ENCODE measurements at regions of chr16 and their contacts with region 1.

Region 1: GRCh38 chr16:71845639-71846430 is at the start of gene ATXN1L:
- DNase-seq: peak; percentile 80 to 96 (median 88)
- ATAC-seq: peak; percentile 93 to 95 (median 94)
- H3K4me3 ChIP-seq: peak within 1 kb of the TSS; percentile 91
- H3K4me3 Mint-ChIP-seq: peak within 1 kb of the TSS; percentile 91 to 94 (median 92)
- H3K27ac ChIP-seq: peak within 1 kb of the TSS; percentile 91
- H3K27ac Mint-ChIP-seq: peak within 1 kb of the TSS; percentile 92 to 95
- H3K4me1 ChIP-seq: peaks cover 13 to 18% of the 10 kb centered on the region in 2 experiments
- H3K4me1 Mint-ChIP-seq: peaks cover 32 to 44% (median 42%) of the 10 kb centered on the region in 3 donors
- H3K27me3 ChIP-seq: no peaks in the 10 kb centered on the region
- H3K27me3 Mint-ChIP-seq: no peaks in the 10 kb centered on the region
- total RNA-seq, gene ATXN1L: 26.8 to 44.0 (median 29.3) TPM

Region 2: GRCh38 chr16:71315269-71315668 is 530.6 kb before region 1 on chr16:
- CTCF ChIA-PET with region 1: interaction called in 1 of 2 experiments, 12 read pairs
- POLR2A ChIA-PET with region 1: no interaction called
- DNase-seq: no peak
- ATAC-seq: no peak
- H3K4me3 ChIP-seq: no peak overlapping the region
- H3K4me3 Mint-ChIP-seq: no peak overlapping the region
- H3K27ac ChIP-seq: no peak overlapping the region
- H3K27ac Mint-ChIP-seq: no peak overlapping the region
- H3K4me1 ChIP-seq: peaks cover 0 to 3% of the 10 kb centered on the region in 2 experiments
- H3K4me1 Mint-ChIP-seq: no peaks in the 10 kb centered on the region
- H3K27me3 ChIP-seq: peaks cover 0 to 17% of the 10 kb centered on the region in 2 experiments
- H3K27me3 Mint-ChIP-seq: peaks cover 40 to 46% of the 10 kb centered on the region in 2 donors

Region 3: DNA sequence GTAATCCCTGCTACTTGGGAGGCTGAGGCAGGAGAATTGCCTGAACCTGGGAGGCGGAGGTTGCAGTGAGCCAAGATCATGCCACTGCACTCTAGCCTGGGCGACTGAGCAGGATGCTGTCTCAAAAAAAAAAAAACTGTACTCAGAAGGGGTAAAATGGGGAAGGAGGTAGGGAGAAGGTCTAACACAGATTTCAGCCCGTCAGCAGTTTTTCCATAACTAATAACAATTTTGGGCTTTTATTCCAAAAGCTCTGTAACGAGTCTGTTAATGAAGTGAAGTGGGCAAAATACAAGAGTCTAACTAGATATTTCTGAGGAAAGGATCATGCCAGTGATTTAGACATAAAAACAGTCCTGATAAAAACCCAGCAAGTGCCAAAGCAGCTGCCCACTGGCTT is 27.4 kb after region 1 on chr16:
- CTCF ChIA-PET with region 1: interaction called in 1 of 2 experiments, 10 read pairs
- POLR2A ChIA-PET with region 1: interaction called in 1 of 2 experiments, 4 read pairs
- DNase-seq: no peak
- ATAC-seq: peak in 1 of 4 experiments; percentile 26
- H3K4me3 ChIP-seq: no peak overlapping the region
- H3K4me3 Mint-ChIP-seq: peak overlapping the region in 2 of 3 donors; percentile 58 to 75
- H3K27ac ChIP-seq: no peak overlapping the region
- H3K27ac Mint-ChIP-seq: peak overlapping the region; percentile 81 to 89
- H3K4me1 ChIP-seq: peaks cover 6 to 7% of the 10 kb centered on the region in 2 experiments
- H3K4me1 Mint-ChIP-seq: peaks cover 13 to 26% (median 20%) of the 10 kb centered on the region in 3 donors
- H3K27me3 ChIP-seq: no peaks in the 10 kb centered on the region
- H3K27me3 Mint-ChIP-seq: no peaks in the 10 kb centered on the region

Region 4: GRCh38 chr16:71979617-71980016 is 133.8 kb after region 1 on chr16:
- CTCF ChIA-PET with region 1: no interaction called
- POLR2A ChIA-PET with region 1: no interaction called
- DNase-seq: no peak
- ATAC-seq: no peak
- H3K4me3 ChIP-seq: no peak overlapping the region
- H3K4me3 Mint-ChIP-seq: no peak overlapping the region
- H3K27ac ChIP-seq: no peak overlapping the region
- H3K27ac Mint-ChIP-seq: no peak overlapping the region
- H3K4me1 ChIP-seq: no peaks in the 10 kb centered on the region
- H3K4me1 Mint-ChIP-seq: no peaks in the 10 kb centered on the region
- H3K27me3 ChIP-seq: peaks cover 0 to 18% of the 10 kb centered on the region in 2 experiments
- H3K27me3 Mint-ChIP-seq: peaks cover 12 to 16% of the 10 kb centered on the region in 2 donors